MCF 10A (cell line): ENCODE measurements at regions of chrX and their contacts with region 1.

Region 1: GRCh38 chrX:29903360-29903759 is 312.0 kb upstream of the MAGEB2 start:
- DNase-seq: peak; percentile 9
- H3K4me3 Mint-ChIP-seq: no peak overlapping the region
- H3K27ac Mint-ChIP-seq: no peak overlapping the region
- H3K4me1 Mint-ChIP-seq: no peaks in the 10 kb centered on the region
- H3K27me3 Mint-ChIP-seq: peaks cover 41% of the 10 kb centered on the region
- CTCF ChIP-seq: peak; percentile 34

Region 2: DNA sequence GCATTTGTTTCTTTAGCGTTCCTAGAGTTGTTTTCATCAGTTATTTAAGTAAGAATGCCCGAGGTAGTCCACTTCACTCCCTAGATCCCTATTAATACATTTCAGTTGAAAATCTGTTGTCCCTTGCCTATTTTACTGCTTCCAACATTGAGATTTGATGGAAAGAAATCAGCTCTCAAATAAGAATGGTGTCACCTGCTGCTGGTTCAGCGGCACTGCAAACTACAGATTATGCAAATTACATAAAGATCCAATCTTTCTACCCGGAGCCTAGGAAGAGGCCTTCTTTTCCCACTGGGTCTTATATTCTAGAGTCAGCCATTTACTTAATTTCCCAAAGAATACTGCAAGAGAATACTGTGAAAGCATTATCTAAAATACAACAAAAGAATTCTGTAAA is 285.6 kb before region 1 on chrX:
- CTCF ChIA-PET with region 1: no interaction called
- POLR2A ChIA-PET with region 1: no interaction called
- intact Hi-C with region 1: no loop called
- DNase-seq: peak; percentile 2
- H3K4me3 Mint-ChIP-seq: no peak overlapping the region
- H3K27ac Mint-ChIP-seq: no peak overlapping the region
- H3K4me1 Mint-ChIP-seq: no peaks in the 10 kb centered on the region
- H3K27me3 Mint-ChIP-seq: peaks cover 27% of the 10 kb centered on the region
- CTCF ChIP-seq: peak; percentile 7

Region 3: GRCh38 chrX:29687687-29688086 is 215.7 kb before region 1 on chrX:
- CTCF ChIA-PET with region 1: no interaction called
- POLR2A ChIA-PET with region 1: no interaction called
- intact Hi-C with region 1: loop called (anchors 10 kb)
- DNase-seq: peak; percentile 14
- H3K4me3 Mint-ChIP-seq: no peak overlapping the region
- H3K27ac Mint-ChIP-seq: no peak overlapping the region
- H3K4me1 Mint-ChIP-seq: no peaks in the 10 kb centered on the region
- H3K27me3 Mint-ChIP-seq: peaks cover 53% of the 10 kb centered on the region
- CTCF ChIP-seq: no peak

Region 4: DNA sequence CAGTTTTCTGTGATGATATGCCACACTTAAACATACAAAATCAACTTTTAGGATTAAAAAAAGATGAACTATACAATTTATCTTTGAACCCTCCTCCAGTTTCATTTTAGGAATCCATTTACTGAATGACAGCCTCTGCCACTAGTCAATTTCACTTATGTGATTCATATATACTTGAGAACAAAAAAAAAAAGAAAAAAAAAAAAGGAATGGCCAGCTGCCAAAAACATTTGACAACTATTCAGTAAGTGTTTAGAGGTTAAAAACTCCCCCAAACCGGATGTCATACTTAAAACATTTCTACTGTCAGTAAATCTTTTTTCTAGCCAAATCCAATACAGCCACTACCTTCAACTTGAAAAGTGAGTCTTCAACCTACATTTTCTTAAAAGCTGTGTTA is 45.3 kb after region 1 on chrX:
- CTCF ChIA-PET with region 1: no interaction called
- POLR2A ChIA-PET with region 1: no interaction called
- intact Hi-C with region 1: no loop called
- DNase-seq: no peak
- H3K4me3 Mint-ChIP-seq: no peak overlapping the region
- H3K27ac Mint-ChIP-seq: no peak overlapping the region
- H3K4me1 Mint-ChIP-seq: no peaks in the 10 kb centered on the region
- H3K27me3 Mint-ChIP-seq: peaks cover 23% of the 10 kb centered on the region
- CTCF ChIP-seq: no peak